ENCODE measurements at regions of chr3 and their contacts with region 1.

Region 1: GRCh38 chr3:141192345-141192744 is 39.3 kb upstream of the PXYLP1 start:
- DNase-seq: peak; percentile 97
- ATAC-seq: peak; percentile 99
- H3K4me3 ChIP-seq: no peak overlapping the region
- H3K27ac ChIP-seq: no peak overlapping the region
- H3K4me1 ChIP-seq: no peaks in the 10 kb centered on the region
- H3K27me3 ChIP-seq: peaks cover 12% of the 10 kb centered on the region
- CTCF ChIP-seq: peak; percentile 98

Region 2: GRCh38 chr3:141000027-141000663 is 192.2 kb before region 1 on chr3:
- intact Hi-C with region 1: loop called (anchors 10 kb)
- DNase-seq: peak; percentile 61
- ATAC-seq: peak; percentile 87 to 91
- H3K4me3 ChIP-seq: no peak overlapping the region
- H3K27ac ChIP-seq: no peak overlapping the region
- H3K4me1 ChIP-seq: no peaks in the 10 kb centered on the region
- H3K27me3 ChIP-seq: no peaks in the 10 kb centered on the region
- CTCF ChIP-seq: peak; percentile 65